ENCODE measurements at regions of chr22 and their contacts with region 1.

Region 1: GRCh38 chr22:40036591-40037225 is 42.0 kb downstream of the FAM83F start:
- DNase-seq: peak; percentile 46 to 76 (median 75)
- ATAC-seq: peak; percentile 57 to 67
- H3K4me3 ChIP-seq: no peak overlapping the region
- H3K27ac ChIP-seq: no peak overlapping the region
- H3K4me1 ChIP-seq: no peaks in the 10 kb centered on the region
- H3K27me3 ChIP-seq: no peaks in the 10 kb centered on the region

Region 2: DNA sequence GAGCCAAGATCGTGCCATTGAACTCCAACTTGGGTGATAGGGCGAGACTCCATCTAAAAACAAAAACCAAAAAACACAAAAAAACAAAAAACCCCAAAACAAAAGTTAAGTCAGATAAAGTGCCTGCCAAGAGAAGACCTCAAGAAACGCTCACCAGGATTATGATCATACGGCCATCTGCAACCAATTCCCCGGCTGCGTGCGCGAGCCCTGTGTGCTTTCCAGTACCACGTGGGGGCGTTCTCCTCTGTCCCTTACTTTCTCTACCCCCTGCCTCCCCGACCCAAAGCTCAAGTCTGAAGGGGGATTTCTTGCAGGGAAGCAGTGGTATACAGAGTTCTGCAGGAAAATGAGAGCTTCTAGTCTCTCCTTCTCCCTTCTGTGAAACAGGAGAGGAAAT is 493.6 kb before region 1 on chr22:
- intact Hi-C with region 1: loop called in 3 of 4 experiments (anchors 5 to 10 kb)
- DNase-seq: no peak
- ATAC-seq: no peak
- H3K4me3 ChIP-seq: no peak overlapping the region
- H3K27ac ChIP-seq: no peak overlapping the region
- H3K4me1 ChIP-seq: no peaks in the 10 kb centered on the region
- H3K27me3 ChIP-seq: no peaks in the 10 kb centered on the region

Region 3: GRCh38 chr22:40094485-40094884 is 57.8 kb after region 1 on chr22:
- intact Hi-C with region 1: no loop called
- DNase-seq: no peak
- ATAC-seq: no peak
- H3K4me3 ChIP-seq: no peak overlapping the region
- H3K27ac ChIP-seq: no peak overlapping the region
- H3K4me1 ChIP-seq: no peaks in the 10 kb centered on the region
- H3K27me3 ChIP-seq: no peaks in the 10 kb centered on the region

Measured in right cardiac atrium (tissue), 5 donors.